Caco-2 (cell line): ENCODE measurements at regions of chr4 and their contacts with region 1.

Region 1: DNA sequence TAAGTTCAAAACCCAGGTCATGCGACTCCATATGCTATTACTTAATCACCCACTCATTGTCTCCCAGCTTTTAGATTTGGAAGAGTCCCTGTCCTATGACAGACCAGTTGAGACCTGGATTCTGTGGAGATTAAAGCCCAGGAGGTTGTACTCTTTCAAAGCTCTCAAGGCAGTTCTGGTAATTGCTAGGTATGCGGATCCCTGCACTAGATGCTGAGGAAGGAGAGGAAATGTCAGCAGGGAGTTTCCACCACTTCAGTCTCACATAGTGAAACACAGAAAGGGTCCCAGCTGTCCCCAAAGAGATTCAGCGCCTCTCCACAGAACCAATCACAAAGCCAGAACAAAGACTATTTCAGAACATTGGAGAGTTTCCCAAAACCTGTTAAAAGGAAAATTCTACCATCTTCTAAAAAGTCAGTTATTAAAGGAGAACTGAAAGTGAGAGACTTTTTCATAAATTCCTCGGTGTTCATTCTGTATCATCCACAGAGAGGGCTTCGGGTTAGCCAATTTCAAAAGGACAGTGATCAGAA is 53.4 kb downstream of the IRF2 start:
- DNase-seq: no peak
- H3K4me3 ChIP-seq: no peak overlapping the region
- H3K4me3 Mint-ChIP-seq: no peak overlapping the region
- H3K27ac Mint-ChIP-seq: no peak overlapping the region
- H3K4me1 ChIP-seq: no peaks in the 10 kb centered on the region
- H3K4me1 Mint-ChIP-seq: peaks cover 8% of the 10 kb centered on the region
- H3K27me3 ChIP-seq: no peaks in the 10 kb centered on the region
- H3K27me3 Mint-ChIP-seq: no peaks in the 10 kb centered on the region
- CTCF ChIP-seq: no peak

Region 2: DNA sequence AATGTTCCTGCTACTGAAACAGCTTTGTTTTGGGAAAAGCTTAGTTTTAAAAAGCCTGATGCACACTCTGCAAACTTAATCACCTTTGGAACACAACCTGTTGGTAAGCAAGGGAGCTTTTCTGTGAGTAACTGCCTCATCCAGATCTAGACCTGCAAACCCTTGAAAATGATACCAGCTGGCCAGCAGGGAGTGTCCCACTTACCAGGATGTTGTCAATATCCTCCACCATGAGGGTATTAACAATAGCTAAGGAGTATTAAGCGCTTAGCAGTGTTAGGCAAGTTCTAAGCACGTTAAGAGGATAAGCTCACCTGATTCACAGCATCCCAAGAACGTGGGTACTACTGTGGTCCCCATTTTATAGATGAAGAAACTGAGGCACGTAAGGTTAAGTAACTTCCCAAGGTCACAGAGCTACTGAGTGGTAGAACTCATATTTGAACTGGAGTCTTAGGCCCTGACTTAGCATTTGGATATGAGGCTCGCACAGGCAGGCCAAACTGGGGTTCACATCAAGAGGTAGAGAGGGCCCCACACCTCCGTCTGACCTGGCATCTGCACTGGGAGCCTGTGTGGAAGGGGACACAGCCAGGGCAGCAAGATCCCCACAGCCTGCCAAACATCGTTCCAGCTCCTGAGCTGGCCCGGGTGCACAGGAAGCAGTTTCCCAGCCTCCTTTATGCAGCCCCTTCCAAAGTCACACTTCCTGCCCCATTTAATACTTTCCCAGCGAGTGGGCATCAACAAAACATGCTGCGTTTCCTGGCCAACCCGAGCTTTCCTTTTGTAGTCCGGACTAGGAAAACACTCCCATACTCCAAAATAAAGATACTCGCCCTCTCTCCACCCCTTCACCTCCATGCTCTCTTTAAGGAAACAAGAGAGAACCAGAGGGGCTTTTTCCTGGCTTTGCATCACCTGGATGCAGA is 20.8 kb after region 1 on chr4:
- CTCF ChIA-PET with region 1: no interaction called
- POLR2A ChIA-PET with region 1: no interaction called
- intact Hi-C with region 1: loop called (anchors 1 kb)
- DNase-seq: no peak
- H3K4me3 ChIP-seq: no peak overlapping the region
- H3K4me3 Mint-ChIP-seq: no peak overlapping the region
- H3K27ac Mint-ChIP-seq: peak overlapping the region; percentile 24
- H3K4me1 ChIP-seq: 0 out of 2 replicates have a peak, but pooled peaks cover 6% of the 10 kb centered on the region
- H3K4me1 Mint-ChIP-seq: peaks cover 15% of the 10 kb centered on the region
- H3K27me3 ChIP-seq: no peaks in the 10 kb centered on the region
- H3K27me3 Mint-ChIP-seq: no peaks in the 10 kb centered on the region
- CTCF ChIP-seq: no peak

Region 3: DNA sequence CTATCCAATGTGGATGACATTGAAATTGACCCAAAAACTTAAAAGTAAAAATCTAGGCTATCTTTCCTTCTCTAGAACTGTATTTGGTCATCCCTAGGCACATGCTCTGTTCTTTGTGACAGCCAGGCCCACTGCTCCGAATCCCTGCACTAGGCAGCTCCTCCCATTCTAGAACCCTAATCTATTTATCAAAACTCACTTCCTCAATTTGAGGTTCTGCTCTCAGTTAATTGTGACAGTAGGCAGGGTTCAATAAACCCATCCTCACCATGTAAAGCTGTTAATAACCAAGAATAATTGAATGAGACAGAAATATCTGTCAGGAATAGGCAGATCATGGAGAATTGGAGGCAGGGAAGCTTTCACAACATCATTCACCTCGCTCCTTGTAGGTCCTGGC is 105.3 kb after region 1 on chr4:
- CTCF ChIA-PET with region 1: no interaction called
- POLR2A ChIA-PET with region 1: no interaction called
- intact Hi-C with region 1: no loop called
- DNase-seq: no peak
- H3K4me3 ChIP-seq: no peak overlapping the region
- H3K4me3 Mint-ChIP-seq: no peak overlapping the region
- H3K27ac Mint-ChIP-seq: no peak overlapping the region
- H3K4me1 ChIP-seq: no peaks in the 10 kb centered on the region
- H3K4me1 Mint-ChIP-seq: no peaks in the 10 kb centered on the region
- H3K27me3 ChIP-seq: no peaks in the 10 kb centered on the region
- H3K27me3 Mint-ChIP-seq: no peaks in the 10 kb centered on the region
- CTCF ChIP-seq: no peak